Activated CD4-positive, alpha-beta T cell treated with anti-CD3 and anti-CD28 coated beads for 36 hours (primary cell): ENCODE measurements at regions of chr12 and their contacts with region 1.

Region 1: GRCh38 chr12:123232807-123233543 is at the starts of genes MPHOSPH9 and MTRFR:
- DNase-seq: peak; percentile 99
- ATAC-seq: peak; percentile 91
- H3K4me3 Mint-ChIP-seq: peak within 1 kb of the TSS; percentile 90
- H3K27ac Mint-ChIP-seq: peak within 1 kb of the TSS; percentile 99
- H3K4me1 Mint-ChIP-seq: peaks cover 61% of the 10 kb centered on the region
- H3K27me3 Mint-ChIP-seq: no peaks in the 10 kb centered on the region
- total RNA-seq, gene MPHOSPH9: 94.0 to 128 TPM
- total RNA-seq, gene MTRFR: 31.1 to 34.7 TPM

Region 2: DNA sequence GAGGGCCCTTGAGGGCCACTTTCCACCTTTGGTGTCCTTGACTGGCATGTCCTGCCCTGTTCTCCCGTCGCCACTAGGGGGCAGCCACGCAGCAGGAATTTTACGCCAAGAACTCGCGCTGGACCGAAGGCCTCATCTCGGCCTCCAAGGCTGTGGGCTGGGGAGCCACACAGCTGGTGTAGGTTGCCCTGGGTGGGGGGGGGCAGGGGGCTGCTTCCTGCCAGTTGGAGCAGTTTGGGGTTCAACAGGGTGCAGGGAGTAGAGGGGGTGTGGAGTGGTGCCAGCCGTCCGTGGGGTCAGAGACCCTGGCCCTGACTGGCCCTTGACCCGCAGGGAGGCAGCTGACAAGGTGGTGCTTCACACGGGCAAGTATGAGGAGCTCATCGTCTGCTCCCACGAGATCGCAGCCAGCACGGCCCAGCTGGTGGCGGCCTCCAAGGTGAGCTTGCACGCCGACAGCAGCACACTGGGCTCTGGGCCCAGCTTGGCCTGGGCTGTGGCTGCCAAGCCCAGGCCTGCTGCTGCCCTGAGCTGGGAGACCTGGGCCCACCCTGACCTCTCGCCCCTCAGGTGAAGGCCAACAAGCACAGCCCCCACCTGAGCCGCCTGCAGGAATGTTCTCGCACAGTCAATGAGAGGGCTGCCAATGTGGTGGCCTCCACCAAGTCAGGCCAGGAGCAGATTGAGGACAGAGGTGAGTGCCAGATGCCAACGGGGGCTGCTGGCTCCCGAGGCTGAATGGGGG is 372.5 kb before region 1 on chr12:
- CTCF ChIA-PET with region 1: interaction called, 17 read pairs
- POLR2A ChIA-PET with region 1: no interaction called
- intact Hi-C with region 1: loop called in 1 of 2 experiments (anchors 1 kb)
- DNase-seq: peak; percentile 91
- ATAC-seq: peak; percentile 85
- H3K4me3 Mint-ChIP-seq: no peak overlapping the region
- H3K27ac Mint-ChIP-seq: no peak overlapping the region
- H3K4me1 Mint-ChIP-seq: no peaks in the 10 kb centered on the region
- H3K27me3 Mint-ChIP-seq: no peaks in the 10 kb centered on the region

Region 3: DNA sequence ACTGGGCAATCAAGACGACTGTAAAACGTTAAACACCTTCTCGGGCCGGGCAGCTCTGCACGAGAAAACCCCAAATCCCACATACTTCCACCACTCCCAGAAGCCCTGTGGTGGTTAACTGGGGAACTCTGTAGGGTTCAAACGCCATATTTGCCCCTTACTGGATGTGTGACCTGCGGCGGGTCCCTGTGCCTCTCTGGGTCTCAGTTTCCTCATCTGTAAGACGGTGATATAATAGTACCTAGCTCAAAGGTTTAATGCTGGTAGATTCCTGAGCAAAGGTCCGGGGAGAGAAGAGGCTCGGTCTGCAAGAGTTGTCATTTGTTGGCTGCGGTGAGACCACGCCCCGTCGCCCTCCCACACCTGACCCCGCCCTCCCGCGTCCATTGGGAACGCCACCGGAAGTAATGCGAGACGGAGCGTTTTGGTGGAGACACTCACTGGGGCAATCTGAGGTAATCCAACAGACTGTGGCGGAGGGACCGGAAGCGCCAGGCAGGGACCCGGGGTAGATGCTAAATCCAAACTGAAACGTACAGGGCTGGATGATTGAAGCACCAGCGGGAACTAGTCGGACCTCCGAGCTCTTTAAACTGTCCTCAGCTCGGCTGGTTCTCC is 258.6 kb before region 1 on chr12:
- CTCF ChIA-PET with region 1: interaction called, 4 read pairs
- POLR2A ChIA-PET with region 1: interaction called, 5 read pairs
- intact Hi-C with region 1: loop called (anchors 1 kb)
- DNase-seq: peak; percentile 99
- ATAC-seq: peak; percentile 86
- H3K4me3 Mint-ChIP-seq: peak overlapping the region; percentile 95
- H3K27ac Mint-ChIP-seq: peak overlapping the region; percentile 100
- H3K4me1 Mint-ChIP-seq: peaks cover 21% of the 10 kb centered on the region
- H3K27me3 Mint-ChIP-seq: no peaks in the 10 kb centered on the region

Region 4: GRCh38 chr12:123150744-123151456 is 82.1 kb before region 1 on chr12 and contains the start of gene PITPNM2:
- CTCF ChIA-PET with region 1: interaction called, 9 read pairs
- POLR2A ChIA-PET with region 1: no interaction called
- intact Hi-C with region 1: loop called (anchors 1 to 5 kb)
- DNase-seq: peak; percentile 73
- ATAC-seq: peak; percentile 84
- H3K4me3 Mint-ChIP-seq: peak within 1 kb of the TSS; percentile 74
- H3K27ac Mint-ChIP-seq: peak within 1 kb of the TSS; percentile 85
- H3K4me1 Mint-ChIP-seq: peaks cover 28% of the 10 kb centered on the region
- H3K27me3 Mint-ChIP-seq: no peaks in the 10 kb centered on the region
- total RNA-seq, gene PITPNM2: 8.3 to 9.5 TPM

Region 5: GRCh38 chr12:123382684-123383083 is 149.7 kb after region 1 on chr12:
- CTCF ChIA-PET with region 1: interaction called, 7 read pairs
- POLR2A ChIA-PET with region 1: interaction called, 11 read pairs
- intact Hi-C with region 1: loop called in 1 of 2 experiments (anchors 1 kb)
- DNase-seq: no peak
- ATAC-seq: no peak
- H3K4me3 Mint-ChIP-seq: peak overlapping the region; percentile 50
- H3K27ac Mint-ChIP-seq: no peak overlapping the region
- H3K4me1 Mint-ChIP-seq: peaks cover 8% of the 10 kb centered on the region
- H3K27me3 Mint-ChIP-seq: no peaks in the 10 kb centered on the region

Region 6: DNA sequence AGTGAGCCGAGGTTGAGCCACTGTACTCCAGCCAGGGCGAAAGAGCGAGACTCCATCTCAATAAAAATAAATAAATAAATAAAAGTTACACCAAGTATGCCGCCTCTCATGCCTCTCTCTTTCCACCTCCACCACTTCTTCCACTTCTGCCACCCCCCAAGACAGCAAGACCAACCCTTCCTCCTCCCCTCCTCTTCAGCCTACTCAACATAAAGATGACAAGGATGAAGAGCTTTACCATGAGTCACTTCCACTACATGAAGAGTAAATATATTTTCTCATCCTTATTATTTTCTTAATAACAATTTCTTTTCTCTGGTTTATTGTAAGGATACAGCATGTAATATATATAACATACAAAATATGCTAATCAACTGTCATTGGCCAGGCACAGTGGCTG is 347.8 kb after region 1 on chr12:
- CTCF ChIA-PET with region 1: interaction called, 4 read pairs
- POLR2A ChIA-PET with region 1: no interaction called
- intact Hi-C with region 1: loop called in 1 of 2 experiments (anchors 1 kb)
- DNase-seq: no peak
- ATAC-seq: no peak
- H3K4me3 Mint-ChIP-seq: no peak overlapping the region
- H3K27ac Mint-ChIP-seq: no peak overlapping the region
- H3K4me1 Mint-ChIP-seq: peaks cover 18% of the 10 kb centered on the region
- H3K27me3 Mint-ChIP-seq: no peaks in the 10 kb centered on the region

Region 7: GRCh38 chr12:123843912-123844748 is 611.2 kb after region 1 on chr12:
- CTCF ChIA-PET with region 1: no interaction called
- POLR2A ChIA-PET with region 1: no interaction called
- intact Hi-C with region 1: no loop called
- DNase-seq: no peak
- ATAC-seq: no peak
- H3K4me3 Mint-ChIP-seq: no peak overlapping the region
- H3K27ac Mint-ChIP-seq: no peak overlapping the region
- H3K4me1 Mint-ChIP-seq: no peaks in the 10 kb centered on the region
- H3K27me3 Mint-ChIP-seq: peaks cover 2% of the 10 kb centered on the region